Activated CD8-positive, alpha-beta T cell treated with anti-CD3 and anti-CD28 coated beads for 36 hours (primary cell): ENCODE measurements at regions of chr2 and their contacts with region 1.

Region 1: GRCh38 chr2:153519257-153519875 is 40.8 kb upstream of the RPRM start:
- DNase-seq: peak; percentile 75
- ATAC-seq: no peak
- H3K4me3 Mint-ChIP-seq: no peak overlapping the region
- H3K27ac Mint-ChIP-seq: no peak overlapping the region
- H3K4me1 Mint-ChIP-seq: no peaks in the 10 kb centered on the region
- H3K27me3 Mint-ChIP-seq: peaks cover 11% of the 10 kb centered on the region
- CTCF ChIP-seq: peak; percentile 76

Region 2: GRCh38 chr2:152925547-152926327 is 593.6 kb before region 1 on chr2:
- CTCF ChIA-PET with region 1: interaction called, 4 read pairs
- POLR2A ChIA-PET with region 1: no interaction called
- intact Hi-C with region 1: loop called (anchors 10 kb)
- DNase-seq: peak; percentile 64
- ATAC-seq: peak; percentile 37
- H3K4me3 Mint-ChIP-seq: no peak overlapping the region
- H3K27ac Mint-ChIP-seq: no peak overlapping the region
- H3K4me1 Mint-ChIP-seq: no peaks in the 10 kb centered on the region
- H3K27me3 Mint-ChIP-seq: no peaks in the 10 kb centered on the region
- CTCF ChIP-seq: peak; percentile 70

Region 3: GRCh38 chr2:153163058-153163457 is 356.3 kb before region 1 on chr2:
- CTCF ChIA-PET with region 1: interaction called, 8 read pairs
- POLR2A ChIA-PET with region 1: no interaction called
- intact Hi-C with region 1: loop called (anchors 10 kb)
- DNase-seq: peak; percentile 4
- ATAC-seq: no peak
- H3K4me3 Mint-ChIP-seq: no peak overlapping the region
- H3K27ac Mint-ChIP-seq: no peak overlapping the region
- H3K4me1 Mint-ChIP-seq: no peaks in the 10 kb centered on the region
- H3K27me3 Mint-ChIP-seq: no peaks in the 10 kb centered on the region
- CTCF ChIP-seq: peak; percentile 60